Caco-2 (cell line): ENCODE measurements at regions of chr17 and their contacts with region 1.

Region 1: GRCh38 chr17:21284319-21285163 is at the start of gene MAP2K3:
- DNase-seq: peak; percentile 99 to 100
- H3K4me3 ChIP-seq: peak within 1 kb of the TSS; percentile 83
- H3K4me3 Mint-ChIP-seq: peak within 1 kb of the TSS; percentile 89
- H3K27ac Mint-ChIP-seq: peak within 1 kb of the TSS; percentile 70
- H3K4me1 ChIP-seq: peaks cover 22% of the 10 kb centered on the region
- H3K4me1 Mint-ChIP-seq: peaks cover 24% of the 10 kb centered on the region
- H3K27me3 ChIP-seq: no peaks in the 10 kb centered on the region; the same call in 1 of the 2 replicates
- H3K27me3 Mint-ChIP-seq: no peaks in the 10 kb centered on the region
- CTCF ChIP-seq: no peak
- total RNA-seq, gene MAP2K3: 49.5 and 50.9 TPM in 2 replicates

Region 2: GRCh38 chr17:21119247-21119918 is 165.2 kb before region 1 on chr17:
- CTCF ChIA-PET with region 1: no interaction called
- POLR2A ChIA-PET with region 1: no interaction called
- intact Hi-C with region 1: no loop called
- DNase-seq: peak; percentile 69 to 75
- H3K4me3 ChIP-seq: no peak overlapping the region; the same call in 1 of the 2 replicates
- H3K4me3 Mint-ChIP-seq: peak overlapping the region; percentile 22
- H3K27ac Mint-ChIP-seq: no peak overlapping the region
- H3K4me1 ChIP-seq: peaks cover 7% of the 10 kb centered on the region; the same call in 1 of the 2 replicates
- H3K4me1 Mint-ChIP-seq: peaks cover 4% of the 10 kb centered on the region
- H3K27me3 ChIP-seq: no peaks in the 10 kb centered on the region
- H3K27me3 Mint-ChIP-seq: no peaks in the 10 kb centered on the region
- CTCF ChIP-seq: peak; percentile 90 to 97

Region 3: GRCh38 chr17:21318439-21318838 is 33.9 kb after region 1 on chr17:
- CTCF ChIA-PET with region 1: interaction called, 3 read pairs
- POLR2A ChIA-PET with region 1: no interaction called
- intact Hi-C with region 1: loop called (anchors 5 kb)
- DNase-seq: no peak
- H3K4me3 ChIP-seq: no peak overlapping the region
- H3K4me3 Mint-ChIP-seq: no peak overlapping the region
- H3K27ac Mint-ChIP-seq: no peak overlapping the region
- H3K4me1 ChIP-seq: no peaks in the 10 kb centered on the region
- H3K4me1 Mint-ChIP-seq: peaks cover 7% of the 10 kb centered on the region
- H3K27me3 ChIP-seq: no peaks in the 10 kb centered on the region
- H3K27me3 Mint-ChIP-seq: peaks cover 4% of the 10 kb centered on the region
- CTCF ChIP-seq: no peak

Region 4: GRCh38 chr17:21376759-21377690 is 92.5 kb after region 1 on chr17:
- CTCF ChIA-PET with region 1: no interaction called
- POLR2A ChIA-PET with region 1: no interaction called
- intact Hi-C with region 1: loop called (anchors 10 kb)
- DNase-seq: peak in 1 of 2 experiments; percentile 38
- H3K4me3 ChIP-seq: peak overlapping the region; percentile 35
- H3K4me3 Mint-ChIP-seq: peak overlapping the region; percentile 65
- H3K27ac Mint-ChIP-seq: no peak overlapping the region
- H3K4me1 ChIP-seq: 0 out of 2 replicates have a peak, but pooled peaks cover 9% of the 10 kb centered on the region
- H3K4me1 Mint-ChIP-seq: no peaks in the 10 kb centered on the region
- H3K27me3 ChIP-seq: no peaks in the 10 kb centered on the region
- H3K27me3 Mint-ChIP-seq: peaks cover 4% of the 10 kb centered on the region
- CTCF ChIP-seq: no peak